SK-MEL-5 (cell line): ENCODE measurements at regions of chr18 and their contacts with region 1.

Region 1: DNA sequence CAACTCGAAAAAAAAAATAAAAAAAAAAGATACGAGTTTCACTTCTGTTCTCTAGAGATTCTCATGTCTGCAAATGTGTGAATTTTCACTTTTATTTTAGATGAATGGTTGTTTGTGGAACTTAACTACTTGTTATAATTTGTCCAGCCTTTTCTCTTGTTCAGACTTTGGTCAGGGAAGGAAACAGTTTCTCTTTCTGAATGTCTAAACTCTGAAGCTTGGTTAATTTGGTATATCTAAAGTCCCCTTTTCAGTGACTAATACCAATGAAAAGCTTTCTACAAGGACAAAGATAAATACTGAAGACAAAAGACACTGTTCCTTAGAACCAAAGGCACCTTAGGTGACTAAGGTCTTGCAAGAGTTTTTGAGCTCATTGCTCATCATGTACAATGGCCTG is 144.4 kb upstream of the PIEZO2 start:
- DNase-seq: no peak

Region 2: DNA sequence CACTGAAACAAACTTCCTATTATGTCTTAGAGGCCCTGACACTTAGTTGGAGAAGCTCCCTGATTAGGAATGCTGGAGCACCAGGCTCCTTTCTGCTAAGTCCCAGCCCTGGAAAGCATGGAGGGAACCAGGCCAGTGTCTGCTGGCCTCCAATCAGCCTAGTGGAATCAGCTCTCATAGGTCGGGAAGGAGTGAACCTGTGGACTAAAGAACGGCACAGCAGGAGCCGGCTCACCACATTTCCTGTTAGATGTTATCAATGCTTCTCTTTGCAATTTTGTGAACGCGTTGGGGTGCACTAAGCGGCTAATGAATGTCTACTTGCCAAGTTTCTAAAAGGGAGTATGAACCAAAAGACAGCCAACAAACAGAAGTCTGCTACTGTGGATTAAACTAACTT is 471.3 kb before region 1 on chr18:
- in situ Hi-C with region 1: no loop called
- DNase-seq: no peak

Region 3: DNA sequence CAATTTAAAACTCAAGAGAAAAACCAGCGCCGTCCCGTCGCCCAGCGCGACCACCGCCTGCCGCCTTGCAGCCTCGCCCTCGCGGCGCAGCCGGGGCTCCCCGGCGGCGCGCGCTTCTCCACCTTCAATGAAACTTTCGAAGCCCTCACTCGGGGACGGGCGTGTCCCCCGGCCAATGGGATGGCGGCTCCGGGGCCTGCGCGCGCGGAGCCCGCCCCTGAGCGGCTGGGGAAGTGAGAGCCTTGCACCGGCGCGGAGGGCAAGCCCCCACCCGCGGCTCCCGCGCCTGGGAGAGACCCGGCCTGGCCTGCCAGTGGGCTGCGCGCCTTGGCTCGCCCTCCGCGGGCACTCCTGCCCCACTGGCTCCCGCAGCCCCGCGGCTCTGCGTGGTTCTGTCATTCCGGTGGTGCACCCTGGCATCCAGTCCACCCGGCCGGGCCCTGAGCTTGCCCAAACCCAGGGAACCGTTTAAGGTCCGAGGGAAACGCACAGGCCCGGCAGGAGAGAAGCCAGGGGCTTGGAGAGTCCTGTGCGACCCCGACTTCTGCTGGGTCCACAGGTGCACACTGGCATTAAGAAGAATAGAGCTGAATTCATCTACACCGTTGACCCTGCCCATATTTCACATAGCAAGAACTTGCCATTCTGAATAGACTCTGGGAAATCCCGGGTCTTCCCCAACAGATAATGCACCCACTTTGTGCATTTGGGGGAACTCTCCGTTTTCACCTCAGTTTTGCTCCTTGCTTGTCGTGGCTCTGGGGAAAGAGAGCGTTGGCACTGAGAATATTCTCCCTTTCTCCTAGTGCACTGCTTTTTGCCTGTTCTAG is 144.1 kb before region 1 on chr18 and contains the start of gene PIEZO2:
- in situ Hi-C with region 1: loop called (anchors 10 kb)
- DNase-seq: peak; percentile 19
- total RNA-seq, gene PIEZO2: 0.61 and 0.98 TPM in 2 replicates

Region 4: DNA sequence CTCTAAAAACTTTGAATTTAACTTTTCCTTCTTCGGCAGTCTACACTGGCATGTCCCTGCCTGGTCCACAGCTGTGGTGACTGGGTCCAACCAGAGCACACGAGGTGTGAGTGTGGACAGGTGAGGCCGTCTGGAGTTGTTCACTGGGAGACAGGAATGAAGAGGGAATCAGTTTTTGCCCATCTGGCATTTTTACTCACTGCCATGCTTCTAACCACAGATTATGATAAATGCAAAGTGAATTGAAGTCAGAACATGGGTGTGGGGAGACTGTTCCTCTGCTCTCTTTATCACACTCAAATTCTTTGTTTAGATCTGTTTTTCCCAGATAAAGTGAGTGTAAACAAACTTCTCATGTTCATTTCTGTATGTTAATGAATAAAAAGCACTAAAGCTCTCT is 89.8 kb before region 1 on chr18:
- in situ Hi-C with region 1: no loop called
- DNase-seq: no peak